ENCODE measurements at regions of chr6 and their contacts with region 1.

Region 1: GRCh38 chr6:17599885-17600526 is at the start of gene FAM8A1:
- ATAC-seq: peak; percentile 89 to 96 (median 94)
- H3K4me3 ChIP-seq: peak within 1 kb of the TSS; percentile 66 to 93 (median 89)
- H3K27ac ChIP-seq: peak within 1 kb of the TSS; percentile 95 to 96
- H3K4me1 ChIP-seq: peaks cover 3 to 14% of the 10 kb centered on the region in 2 donors
- total RNA-seq, gene FAM8A1: 13.7 to 55.7 (median 27.4) TPM

Region 2: DNA sequence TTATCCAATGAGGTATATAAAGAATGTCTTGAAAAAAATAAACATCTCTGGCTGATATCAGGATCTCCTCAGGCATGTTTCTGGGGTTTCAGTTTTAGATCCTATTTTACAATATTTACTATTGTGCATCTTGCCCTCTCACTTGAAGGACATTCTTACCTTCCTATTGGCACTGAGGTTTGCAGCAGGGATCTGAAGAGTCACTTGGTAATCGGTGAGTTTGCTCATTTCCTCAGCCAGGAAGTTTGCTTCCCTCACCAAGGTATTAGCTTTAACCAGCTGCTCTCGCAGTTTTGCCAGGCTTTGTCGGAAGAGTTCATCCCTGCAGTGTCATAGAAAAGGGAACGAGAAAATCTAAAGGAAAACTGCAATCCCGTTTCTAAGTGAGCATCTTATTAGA is 208.6 kb after region 1 on chr6:
- in situ Hi-C with region 1: loop called in 1 of 9 experiments (anchors 10 kb)
- ATAC-seq: no peak
- H3K4me3 ChIP-seq: no peak overlapping the region
- H3K27ac ChIP-seq: no peak overlapping the region
- H3K4me1 ChIP-seq: no peaks in the 10 kb centered on the region

Measured in motor neuron (in vitro differentiated cells).